ENCODE measurements at regions of chr11 and their contacts with region 1.

Region 1: GRCh38 chr11:103619480-103619879 is 417.0 kb upstream of the DDI1 start:
- DNase-seq: no peak
- H3K4me3 ChIP-seq: no peak overlapping the region
- H3K27ac ChIP-seq: no peak overlapping the region
- H3K4me1 ChIP-seq: no peaks in the 10 kb centered on the region
- H3K27me3 ChIP-seq: no peaks in the 10 kb centered on the region
- CTCF ChIP-seq: peak in 1 of 3 experiments; percentile 6; a peak in 1 of 4 replicates
- EP300 ChIP-seq: no peak
- POLR2A ChIP-seq: no peak
- RAD21 ChIP-seq: peak; percentile 17 to 35; a peak in 3 of 4 replicates

Region 2: DNA sequence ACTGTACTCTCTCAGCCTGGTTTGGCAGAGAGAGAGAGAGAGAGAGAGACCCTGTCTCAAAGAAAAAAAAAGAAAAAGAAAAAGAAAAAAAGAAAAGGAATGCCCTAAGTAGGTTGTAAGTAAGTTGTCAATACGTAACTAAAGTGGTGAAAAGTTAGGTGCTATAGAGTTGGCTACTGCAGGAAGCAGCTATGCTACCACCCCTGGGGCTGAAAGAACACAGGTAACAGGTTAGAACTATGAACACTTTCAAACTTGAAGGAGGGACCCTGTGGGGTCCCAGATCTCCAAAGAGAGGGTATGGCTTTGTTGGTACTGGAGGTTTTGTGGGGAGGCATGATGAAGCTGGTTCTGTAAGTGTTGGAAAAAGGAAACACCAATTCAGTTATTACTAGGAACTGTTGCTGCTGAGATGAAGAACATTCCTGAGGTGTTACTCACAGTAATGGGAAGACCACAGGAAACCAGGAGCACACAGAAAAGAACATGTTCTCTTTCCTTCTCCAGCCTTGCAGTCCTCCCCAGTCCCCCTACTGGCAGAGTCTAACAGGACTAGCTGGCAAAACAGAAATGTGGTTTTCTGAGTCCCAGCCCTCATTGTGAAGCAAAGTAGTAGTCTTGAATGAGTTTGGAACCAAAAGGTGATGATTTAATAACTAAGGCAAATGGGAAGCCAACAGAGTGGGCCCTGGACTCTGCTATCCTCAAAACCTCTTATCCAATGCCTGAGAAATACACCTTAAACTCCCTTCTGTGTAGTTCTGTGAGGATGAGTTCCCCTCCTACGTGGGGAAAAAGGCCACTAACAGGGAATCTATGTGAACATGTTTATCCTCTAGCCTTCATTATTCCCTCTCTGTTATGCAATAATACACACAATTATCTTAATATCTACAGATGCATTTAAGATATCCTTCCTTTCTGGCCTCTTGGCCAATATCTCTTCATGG is 10.1 kb before region 1 on chr11:
- CTCF ChIA-PET with region 1: interaction called, 11 read pairs
- POLR2A ChIA-PET with region 1: no interaction called
- DNase-seq: no peak
- H3K4me3 ChIP-seq: no peak overlapping the region
- H3K27ac ChIP-seq: no peak overlapping the region
- H3K4me1 ChIP-seq: no peaks in the 10 kb centered on the region
- H3K27me3 ChIP-seq: no peaks in the 10 kb centered on the region
- CTCF ChIP-seq: peak; percentile 28 to 73 (median 34)
- EP300 ChIP-seq: no peak
- POLR2A ChIP-seq: no peak
- RAD21 ChIP-seq: peak; percentile 19 to 45; a peak in 3 of 4 replicates

Measured in H1 (cell line).